ENCODE measurements at regions of chr1 and their contacts with region 1.

Region 1: DNA sequence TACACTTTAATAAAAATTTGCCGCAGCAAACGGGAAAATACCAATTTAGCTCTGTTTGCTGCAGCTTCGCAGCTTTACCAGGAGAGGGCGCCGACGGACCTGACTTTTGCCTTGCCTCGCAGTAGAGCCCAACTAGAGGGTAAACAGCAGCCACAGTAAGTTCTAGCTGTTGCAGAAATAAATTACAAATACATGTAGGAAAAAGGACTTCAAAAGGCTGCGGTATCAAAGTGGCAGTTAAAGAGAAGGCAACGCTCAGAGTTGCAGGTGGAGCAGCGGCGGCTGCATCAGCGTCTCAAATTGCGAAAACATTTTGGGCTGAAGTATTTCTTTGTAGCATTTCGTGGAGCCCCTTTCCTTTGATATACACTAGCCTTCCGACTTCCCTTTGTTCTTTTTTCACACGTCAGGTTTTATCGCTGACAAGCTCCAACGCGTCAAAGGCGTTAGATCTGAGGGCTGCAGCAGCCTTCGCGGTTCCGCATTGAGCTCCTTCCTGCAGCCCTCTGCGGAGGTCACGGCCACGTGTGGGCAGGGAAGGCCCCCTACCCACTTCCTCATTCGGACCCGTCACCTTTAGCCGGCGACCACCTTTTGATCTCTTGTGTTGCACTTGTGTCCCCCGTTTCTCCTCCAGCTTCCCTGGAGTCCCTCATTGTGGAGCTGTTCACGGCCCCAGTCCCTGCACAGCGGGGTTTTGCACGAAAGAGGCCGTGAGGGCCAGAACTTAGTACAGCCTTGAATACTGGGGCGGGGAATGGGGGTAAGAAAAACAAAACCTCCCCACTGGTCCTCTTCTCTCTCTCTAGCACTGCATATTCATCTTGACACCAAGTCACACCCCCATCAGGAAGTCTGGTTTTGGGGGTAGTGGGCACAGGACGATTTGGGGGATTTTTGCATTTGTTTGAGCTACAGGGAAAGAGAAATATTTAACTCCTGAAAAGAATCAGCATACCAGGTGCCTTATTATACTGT is 72.8 kb downstream of the S1PR1 start:
- DNase-seq: peak; percentile 81
- ATAC-seq: peak; percentile 81
- H3K4me3 Mint-ChIP-seq: peak overlapping the region; percentile 75
- H3K27ac Mint-ChIP-seq: peak overlapping the region; percentile 95
- H3K4me1 Mint-ChIP-seq: peaks cover 72% of the 10 kb centered on the region
- H3K27me3 Mint-ChIP-seq: no peaks in the 10 kb centered on the region

Region 2: GRCh38 chr1:101298663-101299062 is 11.0 kb before region 1 on chr1:
- CTCF ChIA-PET with region 1: interaction called, 48 read pairs
- POLR2A ChIA-PET with region 1: interaction called, 3 read pairs
- DNase-seq: no peak
- ATAC-seq: no peak
- H3K4me3 Mint-ChIP-seq: no peak overlapping the region
- H3K27ac Mint-ChIP-seq: no peak overlapping the region
- H3K4me1 Mint-ChIP-seq: peaks cover 14% of the 10 kb centered on the region
- H3K27me3 Mint-ChIP-seq: peaks cover 29% of the 10 kb centered on the region

Region 3: GRCh38 chr1:101330427-101331130 is 21.0 kb after region 1 on chr1:
- CTCF ChIA-PET with region 1: interaction called, 15 read pairs
- POLR2A ChIA-PET with region 1: no interaction called
- DNase-seq: no peak
- ATAC-seq: no peak
- H3K4me3 Mint-ChIP-seq: no peak overlapping the region
- H3K27ac Mint-ChIP-seq: no peak overlapping the region
- H3K4me1 Mint-ChIP-seq: peaks cover 18% of the 10 kb centered on the region
- H3K27me3 Mint-ChIP-seq: peaks cover 2% of the 10 kb centered on the region

Region 4: DNA sequence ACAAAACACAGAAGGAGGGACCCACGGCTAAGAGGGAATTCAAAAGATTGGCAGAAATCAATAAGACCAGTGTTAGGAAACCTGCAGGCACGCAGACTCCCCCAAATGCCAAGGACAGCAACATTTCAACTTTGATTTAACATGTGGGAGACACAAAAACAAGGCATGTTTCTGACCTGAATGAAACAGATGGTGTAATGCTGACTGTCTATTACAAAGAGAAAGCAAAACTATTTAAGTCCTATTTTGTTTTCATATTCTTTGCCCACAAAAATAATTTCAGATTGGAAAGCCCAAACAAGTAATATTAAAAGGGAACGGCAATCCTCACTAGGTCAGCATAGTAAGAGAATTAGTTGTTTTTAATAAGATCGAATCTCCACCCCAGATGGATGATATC is 35.1 kb after region 1 on chr1:
- CTCF ChIA-PET with region 1: interaction called, 58 read pairs
- POLR2A ChIA-PET with region 1: interaction called, 5 read pairs
- DNase-seq: no peak
- ATAC-seq: no peak
- H3K4me3 Mint-ChIP-seq: no peak overlapping the region
- H3K27ac Mint-ChIP-seq: no peak overlapping the region
- H3K4me1 Mint-ChIP-seq: peaks cover 38% of the 10 kb centered on the region
- H3K27me3 Mint-ChIP-seq: no peaks in the 10 kb centered on the region

Region 5: DNA sequence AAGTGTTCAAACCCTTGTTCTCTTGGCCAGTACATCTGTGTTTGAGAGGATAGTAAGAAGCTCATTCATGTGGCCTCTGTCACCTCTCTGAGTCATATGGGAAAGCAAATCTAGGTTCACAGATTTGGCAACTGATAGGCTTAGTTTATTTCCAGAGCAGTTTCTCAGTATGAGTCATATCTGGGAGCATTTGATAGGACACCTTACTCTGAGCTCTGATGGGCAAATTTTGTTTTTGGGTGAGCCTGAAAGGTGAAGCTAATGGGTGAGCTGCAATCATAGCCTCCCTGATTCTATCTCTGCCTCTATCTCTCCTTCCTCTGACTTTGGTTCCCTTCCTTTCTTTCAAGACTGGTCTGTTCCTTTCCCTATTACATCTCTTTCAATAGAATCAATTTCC is 61.6 kb after region 1 on chr1:
- CTCF ChIA-PET with region 1: interaction called, 18 read pairs
- POLR2A ChIA-PET with region 1: interaction called, 3 read pairs
- DNase-seq: peak; percentile 24
- ATAC-seq: peak; percentile 92
- H3K4me3 Mint-ChIP-seq: no peak overlapping the region
- H3K27ac Mint-ChIP-seq: peak overlapping the region; percentile 26
- H3K4me1 Mint-ChIP-seq: peaks cover 12% of the 10 kb centered on the region
- H3K27me3 Mint-ChIP-seq: peaks cover 2% of the 10 kb centered on the region

Region 6: GRCh38 chr1:101438359-101438758 is 128.7 kb after region 1 on chr1:
- CTCF ChIA-PET with region 1: interaction called, 35 read pairs
- POLR2A ChIA-PET with region 1: no interaction called
- DNase-seq: no peak
- ATAC-seq: no peak
- H3K4me3 Mint-ChIP-seq: no peak overlapping the region
- H3K27ac Mint-ChIP-seq: no peak overlapping the region
- H3K4me1 Mint-ChIP-seq: no peaks in the 10 kb centered on the region
- H3K27me3 Mint-ChIP-seq: peaks cover 15% of the 10 kb centered on the region

Region 7: DNA sequence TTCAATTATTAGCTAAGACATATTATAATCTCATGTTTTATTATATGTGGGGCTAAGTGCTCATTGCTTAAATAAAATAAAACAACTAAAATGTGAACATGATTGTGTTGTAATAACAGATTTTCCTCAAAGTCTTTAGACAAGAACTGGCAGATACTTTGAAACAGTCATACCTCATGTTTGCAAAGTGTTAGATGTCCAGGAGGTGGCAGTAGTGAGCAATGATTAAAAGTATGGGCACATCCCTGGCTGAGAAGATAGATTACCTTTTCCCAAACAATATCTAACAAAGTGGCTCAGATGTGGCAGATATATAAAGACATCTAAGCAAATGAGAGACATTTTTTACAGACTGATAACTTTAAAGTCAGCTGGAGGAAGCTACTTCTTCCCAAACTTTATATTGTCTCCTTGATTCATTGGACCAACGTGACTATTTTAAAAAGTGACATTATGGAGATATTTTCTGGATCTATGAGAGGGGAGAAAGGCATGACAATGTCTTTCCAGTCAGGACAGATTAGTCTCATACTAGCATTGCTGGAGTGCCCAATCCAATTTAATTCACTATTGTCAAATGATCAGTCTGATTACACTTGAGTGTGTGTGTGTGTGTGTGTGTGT is 197.0 kb after region 1 on chr1:
- CTCF ChIA-PET with region 1: interaction called, 17 read pairs
- POLR2A ChIA-PET with region 1: no interaction called
- DNase-seq: peak; percentile 62
- ATAC-seq: peak; percentile 57
- H3K4me3 Mint-ChIP-seq: no peak overlapping the region
- H3K27ac Mint-ChIP-seq: no peak overlapping the region
- H3K4me1 Mint-ChIP-seq: no peaks in the 10 kb centered on the region
- H3K27me3 Mint-ChIP-seq: peaks cover 14% of the 10 kb centered on the region

Measured in activated CD8-positive, alpha-beta T cell treated with anti-CD3 and anti-CD28 coated beads, Interleukin-2, amount 10 ng/mL, durations not matched to agents 7 days and 5 days (primary cell).